Breast epithelium (tissue), 4 donors: ENCODE measurements at regions of chr15 and their contacts with region 1.

Region 1: GRCh38 chr15:50107591-50108408 is 11.2 kb downstream of the ATP8B4 start:
- DNase-seq: no peak
- H3K4me3 ChIP-seq: no peak overlapping the region
- H3K27ac ChIP-seq: no peak overlapping the region
- H3K4me1 ChIP-seq: no peaks in the 10 kb centered on the region
- H3K27me3 ChIP-seq: no peaks in the 10 kb centered on the region
- CTCF ChIP-seq: no peak
- POLR2A ChIP-seq: no peak

Region 2: DNA sequence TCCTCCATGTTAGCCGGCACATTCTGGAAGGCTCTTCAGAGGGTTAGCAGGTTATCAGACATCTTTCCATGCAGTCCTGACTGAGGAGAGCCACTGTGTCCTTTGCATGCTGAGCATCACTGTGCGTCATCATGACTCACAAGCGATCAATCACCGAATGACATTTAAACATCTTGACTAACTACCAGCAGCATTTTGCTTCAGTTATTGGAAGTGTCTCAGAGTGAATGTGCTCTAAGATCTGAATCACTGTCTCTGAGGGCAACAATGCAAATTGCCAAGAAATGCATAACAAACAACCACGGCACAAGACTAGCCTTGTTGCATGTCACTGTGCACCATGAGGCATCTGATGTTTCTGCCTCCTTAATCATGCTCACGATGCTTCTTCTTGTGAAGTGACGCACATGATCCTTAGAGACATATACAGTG is 29.5 kb after region 1 on chr15:
- intact Hi-C with region 1: loop called (anchors 2 kb)
- DNase-seq: no peak
- H3K4me3 ChIP-seq: no peak overlapping the region
- H3K27ac ChIP-seq: no peak overlapping the region
- H3K4me1 ChIP-seq: no peaks in the 10 kb centered on the region
- H3K27me3 ChIP-seq: no peaks in the 10 kb centered on the region
- CTCF ChIP-seq: no peak
- POLR2A ChIP-seq: no peak

Region 3: GRCh38 chr15:51366960-51367648 is 1259.3 kb after region 1 on chr15:
- intact Hi-C with region 1: no loop called
- DNase-seq: peak in 1 of 2 donors; percentile 30
- H3K4me3 ChIP-seq: no peak overlapping the region
- H3K27ac ChIP-seq: peak overlapping the region in 1 of 2 donors; percentile 39
- H3K4me1 ChIP-seq: peaks cover 0 to 6% of the 10 kb centered on the region in 2 donors
- H3K27me3 ChIP-seq: no peaks in the 10 kb centered on the region
- CTCF ChIP-seq: no peak
- POLR2A ChIP-seq: no peak